CD4-positive, alpha-beta memory T cell (primary cell): ENCODE measurements at regions of chr6 and their contacts with region 1.

Region 1: DNA sequence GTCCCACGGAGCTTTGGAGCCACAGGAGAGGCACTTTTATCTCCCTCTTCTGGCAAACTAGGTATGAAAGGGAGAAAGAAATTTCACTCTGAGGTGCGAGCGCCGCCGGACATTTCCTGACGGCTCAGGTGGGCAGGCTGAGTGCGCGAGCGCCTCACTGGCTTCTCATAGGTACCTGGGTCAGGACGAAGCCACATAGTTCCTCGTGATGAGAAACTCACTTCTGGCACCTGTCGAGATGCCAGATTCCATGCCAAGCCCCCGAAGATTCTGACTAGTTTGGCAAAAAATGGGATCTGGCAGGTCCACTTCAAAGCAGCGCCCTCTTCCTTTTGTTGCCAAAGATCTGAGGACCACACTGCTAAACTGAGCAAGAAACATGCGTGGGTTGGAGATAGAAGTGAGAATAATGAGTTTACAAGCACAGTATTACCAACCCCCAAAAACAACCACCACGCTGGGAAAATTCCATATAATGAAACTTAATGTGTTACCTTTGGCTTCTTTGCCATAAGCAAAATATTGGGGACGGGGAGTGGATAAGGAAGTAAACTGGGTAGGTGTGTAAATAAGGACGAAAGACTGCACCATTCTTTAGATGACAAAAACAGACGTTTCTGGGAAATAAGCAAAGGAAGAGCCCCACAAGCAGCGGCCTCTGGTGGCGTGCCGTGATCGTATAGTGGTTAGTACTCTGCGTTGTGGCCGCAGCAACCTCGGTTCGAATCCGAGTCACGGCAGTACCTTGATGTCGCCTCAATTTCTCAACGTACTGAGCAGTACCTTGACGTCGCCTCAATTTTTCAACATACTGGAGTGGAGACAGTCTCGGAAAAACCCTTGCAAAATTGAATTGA is 89.8 kb upstream of the PRSS16 start:
- DNase-seq: peak; percentile 78 to 92 (median 82)
- H3K4me3 ChIP-seq: peak overlapping the region; percentile 18 to 44
- H3K4me3 Mint-ChIP-seq: peak overlapping the region; percentile 81 to 91 (median 84)
- H3K27ac ChIP-seq: no peak overlapping the region
- H3K27ac Mint-ChIP-seq: peak overlapping the region; percentile 68 to 95 (median 85)
- H3K4me1 ChIP-seq: peaks cover 30% of the 10 kb centered on the region
- H3K4me1 Mint-ChIP-seq: peaks cover 21 to 46% (median 38%) of the 10 kb centered on the region in 4 donors
- H3K27me3 ChIP-seq: no peaks in the 10 kb centered on the region
- H3K27me3 Mint-ChIP-seq: peaks cover 0 to 4% of the 10 kb centered on the region in 2 donors

Region 2: GRCh38 chr6:26607434-26608230 is 550.1 kb before region 1 on chr6:
- CTCF ChIA-PET with region 1: interaction called, 3 read pairs
- POLR2A ChIA-PET with region 1: no interaction called
- intact Hi-C with region 1: loop called (anchors 1 kb)
- DNase-seq: peak; percentile 68 to 74 (median 70)
- H3K4me3 ChIP-seq: peak overlapping the region; percentile 0 to 34
- H3K4me3 Mint-ChIP-seq: peak overlapping the region; percentile 69 to 85 (median 81)
- H3K27ac ChIP-seq: no peak overlapping the region
- H3K27ac Mint-ChIP-seq: peak overlapping the region; percentile 9 to 88 (median 70)
- H3K4me1 ChIP-seq: peaks cover 9% of the 10 kb centered on the region
- H3K4me1 Mint-ChIP-seq: peaks cover 8 to 19% (median 9%) of the 10 kb centered on the region in 4 donors
- H3K27me3 ChIP-seq: no peaks in the 10 kb centered on the region
- H3K27me3 Mint-ChIP-seq: peaks cover 0 to 6% of the 10 kb centered on the region in 2 donors

Region 3: DNA sequence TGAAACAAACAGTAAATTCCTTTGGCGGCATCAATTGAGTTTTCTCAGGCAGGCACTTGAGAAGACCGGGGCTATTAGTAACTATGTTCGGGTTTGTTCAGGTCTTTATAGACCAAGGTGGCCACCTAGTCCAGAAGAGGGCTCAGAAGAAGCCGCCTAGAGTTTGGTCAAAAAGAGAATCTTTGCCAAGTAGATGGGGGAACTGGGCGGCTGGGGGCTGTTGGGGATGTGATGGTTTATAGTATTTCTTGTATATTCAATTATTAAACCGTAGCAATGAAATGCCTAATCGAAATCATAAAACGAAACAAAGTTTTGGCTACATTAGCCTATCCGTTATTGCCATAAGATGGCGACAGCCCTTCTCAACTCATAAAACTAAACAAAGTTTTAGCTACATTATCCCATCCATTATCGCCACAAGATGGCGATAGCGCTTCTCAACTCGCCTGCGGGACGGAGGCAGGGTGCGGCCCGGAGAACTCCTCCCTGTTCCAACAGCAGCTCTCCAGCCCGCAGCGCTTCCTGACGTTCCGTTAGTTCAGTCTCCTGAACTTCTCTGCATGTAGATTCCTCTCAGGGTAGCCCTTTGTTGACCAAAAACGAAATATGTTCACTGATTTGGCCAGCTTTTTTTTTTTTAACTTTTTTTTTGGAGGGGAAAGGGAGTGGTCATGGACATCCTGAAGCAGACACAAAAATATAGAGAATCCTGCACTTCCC is 30.7 kb before region 1 on chr6:
- CTCF ChIA-PET with region 1: interaction called, 46 read pairs
- POLR2A ChIA-PET with region 1: interaction called, 863 read pairs
- intact Hi-C with region 1: loop called (anchors 1 kb)
- DNase-seq: peak; percentile 78 to 86 (median 83)
- H3K4me3 ChIP-seq: peak overlapping the region; percentile 13 to 34
- H3K4me3 Mint-ChIP-seq: peak overlapping the region; percentile 71 to 87 (median 80)
- H3K27ac ChIP-seq: peak overlapping the region; percentile 37
- H3K27ac Mint-ChIP-seq: peak overlapping the region; percentile 79 to 91 (median 89)
- H3K4me1 ChIP-seq: peaks cover 16% of the 10 kb centered on the region
- H3K4me1 Mint-ChIP-seq: peaks cover 14 to 16% (median 16%) of the 10 kb centered on the region in 4 donors
- H3K27me3 ChIP-seq: no peaks in the 10 kb centered on the region
- H3K27me3 Mint-ChIP-seq: no peaks in the 10 kb centered on the region

Region 4: DNA sequence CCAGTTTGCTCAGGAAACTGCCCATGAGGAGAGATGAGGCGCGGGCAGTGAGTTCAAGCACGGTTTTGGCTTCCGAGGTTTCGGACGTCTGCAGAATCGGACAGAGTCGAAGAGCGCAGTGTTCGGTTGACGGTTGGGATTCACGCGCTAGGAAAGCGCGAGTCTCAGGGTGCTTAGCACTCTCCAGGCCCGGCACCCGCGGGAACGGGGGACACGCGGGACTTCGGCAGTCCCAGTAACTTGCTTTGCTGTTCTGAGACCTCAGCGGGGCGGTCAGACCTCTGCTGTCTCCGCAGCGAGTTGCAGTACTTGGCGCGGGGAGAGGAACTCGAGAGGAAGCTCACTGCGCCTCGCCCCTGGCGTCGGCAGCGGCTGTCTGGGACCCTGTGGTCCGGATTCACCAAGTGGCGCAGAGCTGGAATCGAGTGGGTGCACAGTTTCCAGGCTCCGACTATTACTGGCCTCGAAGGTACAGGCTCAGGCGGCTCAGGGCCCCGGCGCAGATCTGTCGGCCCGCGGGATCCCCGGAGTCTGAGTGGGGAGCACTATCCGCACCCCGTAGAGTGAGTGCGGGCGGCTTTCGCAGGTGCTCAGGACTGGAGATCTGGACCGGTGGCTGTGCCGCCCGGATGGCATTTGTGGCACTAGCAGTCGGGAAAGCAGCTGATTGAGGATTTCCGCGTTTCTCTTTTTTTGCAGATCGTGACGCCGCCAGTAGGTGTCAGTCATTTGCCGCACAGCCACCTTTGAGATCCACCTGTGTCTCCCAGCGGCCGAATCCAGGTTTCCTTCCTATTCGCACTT is 154.7 kb after region 1 on chr6 and contains the start of gene POM121L2:
- CTCF ChIA-PET with region 1: no interaction called
- POLR2A ChIA-PET with region 1: no interaction called
- intact Hi-C with region 1: loop called (anchors 1 kb)
- DNase-seq: peak; percentile 50 to 68 (median 61)
- H3K4me3 ChIP-seq: peak within 1 kb of the TSS; percentile 44 to 57
- H3K4me3 Mint-ChIP-seq: peak within 1 kb of the TSS; percentile 81 to 86 (median 83)
- H3K27ac ChIP-seq: no peak within 1 kb of the TSS
- H3K27ac Mint-ChIP-seq: peak within 1 kb of the TSS in 3 of 7 donors; percentile 7 to 37 (median 21)
- H3K4me1 ChIP-seq: peaks cover 5% of the 10 kb centered on the region
- H3K4me1 Mint-ChIP-seq: peaks cover 0 to 14% (median 7%) of the 10 kb centered on the region in 4 donors
- H3K27me3 ChIP-seq: peaks cover 26% of the 10 kb centered on the region
- H3K27me3 Mint-ChIP-seq: peaks cover 39 to 55% of the 10 kb centered on the region in 2 donors
- total RNA-seq, gene POM121L2: not detected

Region 5: GRCh38 chr6:27772261-27773001 is 614.7 kb after region 1 on chr6:
- CTCF ChIA-PET with region 1: interaction called, 16 read pairs
- POLR2A ChIA-PET with region 1: no interaction called
- intact Hi-C with region 1: no loop called
- DNase-seq: peak; percentile 82 to 85 (median 84)
- H3K4me3 ChIP-seq: no peak overlapping the region
- H3K4me3 Mint-ChIP-seq: peak overlapping the region in 5 of 8 donors; percentile 0 to 60 (median 51)
- H3K27ac ChIP-seq: no peak overlapping the region
- H3K27ac Mint-ChIP-seq: peak overlapping the region in 5 of 7 donors; percentile 4 to 80 (median 15)
- H3K4me1 ChIP-seq: peaks cover 11% of the 10 kb centered on the region
- H3K4me1 Mint-ChIP-seq: peaks cover 3 to 17% (median 9%) of the 10 kb centered on the region in 4 donors
- H3K27me3 ChIP-seq: peaks cover 5% of the 10 kb centered on the region
- H3K27me3 Mint-ChIP-seq: peaks cover 7 to 26% of the 10 kb centered on the region in 2 donors

Region 6: DNA sequence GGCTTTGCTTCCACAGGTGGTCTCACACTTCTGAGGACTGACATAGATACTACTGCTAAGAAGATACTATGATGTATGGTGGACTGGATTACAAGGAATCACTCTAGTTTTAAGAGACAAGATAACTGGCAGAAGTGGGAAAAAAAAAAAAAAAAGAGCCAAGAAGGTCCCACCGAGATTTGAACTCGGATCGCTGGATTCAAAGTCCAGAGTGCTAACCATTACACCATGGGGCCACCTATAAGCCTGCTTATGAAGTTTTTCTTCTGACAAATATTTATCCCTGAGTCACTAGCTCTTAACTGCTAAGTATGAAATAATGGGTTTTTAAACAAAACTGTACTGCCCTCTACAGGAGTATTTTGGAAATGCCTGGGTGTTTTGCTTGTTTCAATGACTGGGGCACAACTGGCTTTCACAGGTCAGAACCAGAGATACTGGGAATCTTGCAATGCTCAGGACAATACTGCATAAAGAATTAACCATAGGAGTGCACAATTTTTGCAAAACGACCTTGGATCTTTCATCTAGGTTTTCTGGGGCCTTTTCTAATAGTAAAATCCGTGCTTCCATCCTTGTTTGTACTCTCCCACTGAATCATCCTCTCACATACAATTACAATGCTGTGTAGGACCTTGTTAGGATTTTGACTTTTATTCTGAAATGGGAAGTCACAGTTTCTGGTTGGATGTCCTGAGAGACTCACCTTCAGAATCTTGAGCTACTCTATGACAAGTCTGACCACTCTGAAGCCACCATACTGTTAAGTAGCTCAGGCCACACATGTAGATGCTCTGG is 638.2 kb after region 1 on chr6:
- CTCF ChIA-PET with region 1: interaction called, 22 read pairs
- POLR2A ChIA-PET with region 1: no interaction called
- intact Hi-C with region 1: no loop called
- DNase-seq: peak; percentile 75 to 82 (median 80)
- H3K4me3 ChIP-seq: no peak overlapping the region
- H3K4me3 Mint-ChIP-seq: peak overlapping the region in 1 of 8 donors; percentile 16
- H3K27ac ChIP-seq: no peak overlapping the region
- H3K27ac Mint-ChIP-seq: peak overlapping the region in 5 of 7 donors; percentile 6 to 91 (median 35)
- H3K4me1 ChIP-seq: peaks cover 21% of the 10 kb centered on the region
- H3K4me1 Mint-ChIP-seq: peaks cover 17 to 29% (median 21%) of the 10 kb centered on the region in 4 donors
- H3K27me3 ChIP-seq: peaks cover 6% of the 10 kb centered on the region
- H3K27me3 Mint-ChIP-seq: peaks cover 6 to 13% of the 10 kb centered on the region in 2 donors